Activated CD4-positive, alpha-beta memory T cell treated with anti-CD3 and anti-CD28 coated beads for 36 hours (primary cell): ENCODE measurements at regions of chr6 and their contacts with region 1.

Region 1: DNA sequence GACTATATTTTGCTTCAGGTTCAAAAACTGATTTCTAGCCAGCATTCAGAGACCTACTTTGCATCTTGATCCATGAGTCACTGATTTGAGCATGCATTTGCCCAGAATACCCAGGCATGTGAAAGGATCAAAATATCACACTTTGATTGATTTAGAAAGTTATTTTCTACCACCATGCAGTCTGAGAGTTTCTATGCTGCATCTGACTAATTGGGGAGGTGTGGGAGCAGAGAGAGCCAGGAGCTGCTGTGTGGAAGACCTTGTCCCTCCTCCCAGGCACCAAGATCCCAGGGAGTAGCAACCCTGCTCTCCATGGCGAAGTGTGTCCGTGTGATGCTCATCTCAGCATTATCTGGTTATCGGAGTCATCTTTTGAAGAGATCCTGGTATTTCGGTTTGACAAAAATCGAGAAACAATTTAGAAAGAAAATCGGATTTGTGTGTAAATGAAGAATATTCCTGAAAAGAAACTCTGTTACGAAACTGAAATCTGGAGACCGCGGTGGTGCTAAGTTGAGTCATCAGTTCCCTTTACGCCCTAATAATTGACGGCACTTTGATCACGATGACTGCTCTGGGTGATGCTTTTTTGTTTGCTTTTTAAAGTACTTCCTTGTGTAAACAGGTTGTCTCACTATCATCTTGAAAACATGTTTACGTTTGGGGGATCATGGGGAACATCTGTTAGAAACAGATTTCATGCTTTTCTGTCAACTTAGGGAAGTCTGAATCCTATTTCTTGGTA is 193.4 kb downstream of the BACH2 start:
- DNase-seq: peak; percentile 66
- H3K4me3 Mint-ChIP-seq: peak overlapping the region; percentile 39
- H3K27ac Mint-ChIP-seq: peak overlapping the region; percentile 63
- H3K4me1 Mint-ChIP-seq: peaks cover 67% of the 10 kb centered on the region
- H3K27me3 Mint-ChIP-seq: peaks cover 5% of the 10 kb centered on the region

Region 2: DNA sequence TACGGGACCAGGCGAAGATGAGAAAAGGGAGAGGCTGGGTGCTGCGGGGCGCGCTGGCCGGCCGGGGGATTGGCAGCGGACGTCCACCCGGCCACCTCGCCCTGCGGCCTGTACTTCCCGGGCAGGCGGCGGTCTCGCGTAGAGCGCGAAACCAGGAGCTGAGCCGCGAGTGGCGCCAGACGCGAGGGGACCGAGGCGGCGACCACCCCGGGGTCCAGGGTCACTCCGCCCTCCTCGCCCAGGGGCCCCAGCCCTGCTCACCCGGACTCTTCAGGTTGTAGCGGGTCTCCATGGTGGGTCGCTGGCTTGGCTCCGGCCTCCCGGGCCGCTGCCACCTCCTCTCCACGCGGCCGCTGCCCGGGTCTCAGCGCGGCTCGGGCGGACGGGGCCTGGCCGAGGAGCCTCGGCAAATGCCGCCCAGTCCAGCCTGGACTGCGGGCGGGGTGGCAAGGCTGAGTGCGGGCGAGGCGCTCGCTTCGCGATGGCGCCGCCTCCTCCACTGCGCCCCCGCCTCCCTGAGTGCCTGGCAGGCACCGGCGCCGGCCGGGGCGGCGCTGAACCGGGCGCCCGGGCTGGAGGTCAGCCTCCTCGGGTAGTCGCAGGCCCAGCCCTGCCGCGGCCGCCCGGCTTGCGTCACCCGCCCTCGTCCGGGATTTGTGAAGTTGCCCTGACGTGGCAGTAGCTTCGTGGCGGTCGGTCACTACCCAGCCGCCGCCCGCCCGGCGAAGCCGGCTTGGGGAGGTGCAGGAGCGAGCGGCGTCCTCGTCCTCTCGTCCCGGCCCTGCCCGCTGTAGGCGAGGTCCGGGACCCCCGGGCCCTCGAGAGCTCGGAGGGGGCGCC is 750.7 kb before region 1 on chr6 and contains the start of gene UBE2J1:
- CTCF ChIA-PET with region 1: no interaction called
- POLR2A ChIA-PET with region 1: no interaction called
- intact Hi-C with region 1: loop called (anchors 10 kb)
- DNase-seq: peak; percentile 85
- H3K4me3 Mint-ChIP-seq: peak within 1 kb of the TSS; percentile 91
- H3K27ac Mint-ChIP-seq: peak within 1 kb of the TSS; percentile 84
- H3K4me1 Mint-ChIP-seq: peaks cover 75% of the 10 kb centered on the region
- H3K27me3 Mint-ChIP-seq: no peaks in the 10 kb centered on the region
- total RNA-seq, gene UBE2J1: 23.8 to 24.9 TPM

Region 3: GRCh38 chr6:90049295-90049694 is 53.9 kb before region 1 on chr6:
- CTCF ChIA-PET with region 1: no interaction called
- POLR2A ChIA-PET with region 1: no interaction called
- intact Hi-C with region 1: loop called (anchors 2 kb)
- DNase-seq: peak; percentile 44
- H3K4me3 Mint-ChIP-seq: peak overlapping the region; percentile 18
- H3K27ac Mint-ChIP-seq: peak overlapping the region; percentile 89
- H3K4me1 Mint-ChIP-seq: peaks cover 51% of the 10 kb centered on the region
- H3K27me3 Mint-ChIP-seq: no peaks in the 10 kb centered on the region

Region 4: GRCh38 chr6:90121982-90122381 is 18.8 kb after region 1 on chr6:
- CTCF ChIA-PET with region 1: no interaction called
- POLR2A ChIA-PET with region 1: no interaction called
- intact Hi-C with region 1: loop called (anchors 2 kb)
- DNase-seq: peak; percentile 62
- H3K4me3 Mint-ChIP-seq: no peak overlapping the region
- H3K27ac Mint-ChIP-seq: peak overlapping the region; percentile 14
- H3K4me1 Mint-ChIP-seq: peaks cover 24% of the 10 kb centered on the region
- H3K27me3 Mint-ChIP-seq: no peaks in the 10 kb centered on the region

Region 5: GRCh38 chr6:90144396-90144795 is 41.2 kb after region 1 on chr6:
- CTCF ChIA-PET with region 1: no interaction called
- POLR2A ChIA-PET with region 1: interaction called, 3 read pairs
- intact Hi-C with region 1: loop called (anchors 1 kb)
- DNase-seq: peak; percentile 74
- H3K4me3 Mint-ChIP-seq: no peak overlapping the region
- H3K27ac Mint-ChIP-seq: peak overlapping the region; percentile 57
- H3K4me1 Mint-ChIP-seq: peaks cover 54% of the 10 kb centered on the region
- H3K27me3 Mint-ChIP-seq: no peaks in the 10 kb centered on the region

Region 6: GRCh38 chr6:90179190-90180169 is 76.3 kb after region 1 on chr6:
- CTCF ChIA-PET with region 1: no interaction called
- POLR2A ChIA-PET with region 1: interaction called, 3 read pairs
- intact Hi-C with region 1: loop called (anchors 1 kb)
- DNase-seq: no peak
- H3K4me3 Mint-ChIP-seq: no peak overlapping the region
- H3K27ac Mint-ChIP-seq: no peak overlapping the region
- H3K4me1 Mint-ChIP-seq: peaks cover 59% of the 10 kb centered on the region
- H3K27me3 Mint-ChIP-seq: peaks cover 3% of the 10 kb centered on the region

Region 7: DNA sequence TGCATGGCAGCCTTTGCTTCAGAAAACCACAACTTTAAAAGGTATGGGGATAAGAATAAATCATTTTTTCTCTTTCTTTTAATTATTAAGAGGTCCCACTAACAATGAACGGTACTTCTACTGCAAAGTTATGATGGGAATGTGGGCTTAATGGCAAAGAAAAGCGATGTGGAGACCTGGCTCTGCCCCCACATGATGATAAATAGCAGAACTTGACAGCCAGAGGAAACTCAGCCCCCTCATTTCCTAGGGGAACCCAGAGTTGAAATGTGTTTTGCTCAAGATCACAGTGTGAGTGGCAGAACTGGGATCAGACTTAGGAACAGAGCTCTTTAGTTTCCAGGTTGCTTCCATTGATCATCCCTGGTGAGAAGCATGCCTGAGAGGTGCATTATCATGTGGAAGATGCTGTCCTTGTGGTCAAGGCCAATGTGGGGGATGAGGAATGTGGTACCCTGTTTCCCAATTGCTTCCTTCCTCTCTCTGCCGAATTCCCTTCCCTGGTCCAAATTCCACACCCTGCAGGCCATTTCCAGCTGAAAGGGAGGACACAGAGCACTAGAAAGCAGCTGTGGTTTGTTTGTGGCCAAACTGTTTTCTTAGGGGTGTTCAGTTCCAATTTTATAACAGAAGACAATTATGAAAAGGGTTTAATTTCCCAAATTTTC is 127.5 kb after region 1 on chr6:
- CTCF ChIA-PET with region 1: no interaction called
- POLR2A ChIA-PET with region 1: no interaction called
- intact Hi-C with region 1: loop called (anchors 5 kb)
- DNase-seq: no peak
- H3K4me3 Mint-ChIP-seq: no peak overlapping the region
- H3K27ac Mint-ChIP-seq: no peak overlapping the region
- H3K4me1 Mint-ChIP-seq: peaks cover 88% of the 10 kb centered on the region
- H3K27me3 Mint-ChIP-seq: no peaks in the 10 kb centered on the region